IMR-90 (cell line): ENCODE measurements at regions of chr3 and their contacts with region 1.

Region 1: GRCh38 chr3:190701096-190701532 is 161.4 kb downstream of the GMNC start:
- DNase-seq: peak; percentile 44
- ATAC-seq: peak; percentile 87
- H3K4me3 ChIP-seq: no peak overlapping the region
- H3K27ac ChIP-seq: no peak overlapping the region
- H3K4me1 ChIP-seq: no peaks in the 10 kb centered on the region
- H3K27me3 ChIP-seq: no peaks in the 10 kb centered on the region
- CTCF ChIP-seq: peak; percentile 54
- POLR2A ChIP-seq: no peak
- RAD21 ChIP-seq: peak; percentile 62

Region 2: DNA sequence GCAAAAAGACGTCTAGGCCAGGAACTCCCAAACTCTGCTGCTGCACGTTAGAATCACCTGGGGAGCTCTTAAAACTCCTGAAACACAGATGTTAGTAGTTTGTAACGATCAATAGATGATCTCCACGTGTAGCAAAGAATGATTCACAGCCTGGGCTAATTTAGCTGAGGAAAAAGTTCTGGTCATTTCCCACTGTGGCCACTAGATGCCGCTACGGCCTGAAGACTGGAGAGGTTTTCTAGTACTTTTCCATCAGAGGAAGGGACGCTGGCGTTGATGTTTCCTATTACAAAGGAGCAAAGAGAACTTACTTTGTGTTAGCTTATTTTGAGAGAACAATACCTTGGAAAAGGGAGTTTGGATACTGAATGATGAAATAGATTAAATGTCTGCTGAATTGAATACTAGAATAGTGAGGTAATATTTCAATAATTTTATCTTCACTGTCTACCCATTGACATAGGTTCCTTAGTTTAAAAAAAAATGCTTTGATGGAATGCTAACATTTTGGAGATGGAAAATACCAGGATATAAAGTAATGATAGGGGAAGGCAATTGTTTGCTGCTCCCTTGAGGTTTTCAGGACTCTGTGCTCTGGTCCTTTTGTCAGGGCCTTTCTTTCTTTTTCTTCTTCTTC is 739.5 kb before region 1 on chr3:
- CTCF ChIA-PET with region 1: interaction called, 6 read pairs
- POLR2A ChIA-PET with region 1: no interaction called
- dilution Hi-C with region 1: no loop called
- in situ Hi-C with region 1: loop called (anchors 10 kb)
- intact Hi-C with region 1: loop called (anchors 1 kb)
- DNase-seq: peak; percentile 82
- ATAC-seq: peak; percentile 92
- H3K4me3 ChIP-seq: no peak overlapping the region
- H3K27ac ChIP-seq: no peak overlapping the region
- H3K4me1 ChIP-seq: no peaks in the 10 kb centered on the region
- H3K27me3 ChIP-seq: no peaks in the 10 kb centered on the region
- CTCF ChIP-seq: peak; percentile 96
- POLR2A ChIP-seq: no peak
- RAD21 ChIP-seq: peak; percentile 93

Region 3: GRCh38 chr3:190224863-190225692 is 476.0 kb before region 1 on chr3:
- CTCF ChIA-PET with region 1: no interaction called
- POLR2A ChIA-PET with region 1: no interaction called
- dilution Hi-C with region 1: no loop called
- in situ Hi-C with region 1: no loop called
- intact Hi-C with region 1: loop called (anchors 1 kb)
- DNase-seq: peak; percentile 42
- ATAC-seq: peak; percentile 40; the same call in 1 of the 2 replicates
- H3K4me3 ChIP-seq: no peak overlapping the region
- H3K27ac ChIP-seq: no peak overlapping the region
- H3K4me1 ChIP-seq: no peaks in the 10 kb centered on the region
- H3K27me3 ChIP-seq: no peaks in the 10 kb centered on the region
- CTCF ChIP-seq: peak; percentile 65
- POLR2A ChIP-seq: no peak
- RAD21 ChIP-seq: peak; percentile 68

Region 4: DNA sequence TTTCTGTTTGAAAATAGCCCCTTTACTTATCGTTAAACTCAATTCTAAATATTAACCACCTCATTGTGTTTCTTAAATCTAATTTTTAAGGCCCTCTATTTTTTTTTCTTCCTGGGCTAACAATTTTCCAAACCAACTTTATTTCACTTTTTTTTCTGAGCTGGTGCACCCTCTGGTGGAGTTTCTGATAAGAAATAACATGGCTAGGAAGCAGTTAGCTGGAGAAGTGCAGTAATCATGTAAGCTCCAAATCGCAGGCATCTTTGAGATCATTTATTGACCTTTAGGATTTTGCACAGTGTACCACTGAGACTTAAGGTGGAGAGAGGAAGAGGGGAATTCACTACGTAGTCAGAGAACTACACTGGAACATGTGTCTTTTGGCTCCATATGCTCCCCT is 257.9 kb before region 1 on chr3:
- CTCF ChIA-PET with region 1: no interaction called
- POLR2A ChIA-PET with region 1: no interaction called
- dilution Hi-C with region 1: no loop called
- in situ Hi-C with region 1: no loop called
- intact Hi-C with region 1: loop called (anchors 5 kb)
- DNase-seq: peak; percentile 44
- ATAC-seq: no peak
- H3K4me3 ChIP-seq: no peak overlapping the region
- H3K27ac ChIP-seq: no peak overlapping the region
- H3K4me1 ChIP-seq: no peaks in the 10 kb centered on the region
- H3K27me3 ChIP-seq: no peaks in the 10 kb centered on the region
- CTCF ChIP-seq: peak; percentile 52
- POLR2A ChIP-seq: no peak
- RAD21 ChIP-seq: peak; percentile 43

Region 5: DNA sequence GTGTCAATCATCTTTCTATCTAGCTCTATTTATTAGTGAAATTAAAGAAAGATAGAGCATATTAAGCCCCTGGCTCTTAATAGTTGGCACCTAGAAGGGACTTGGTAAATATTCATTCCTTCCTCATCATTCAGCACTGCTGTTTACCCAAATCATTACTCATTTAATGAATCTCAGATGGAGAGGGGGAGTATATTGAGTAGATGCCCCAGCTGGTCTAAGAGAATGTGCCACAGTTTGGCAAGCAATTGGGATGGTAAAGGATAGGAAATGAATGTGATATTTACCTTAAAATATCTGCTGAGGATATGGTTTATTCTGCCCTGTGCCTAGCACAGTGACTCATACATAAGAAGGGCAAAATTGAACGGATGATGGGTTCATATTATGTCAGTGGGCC is 181.2 kb before region 1 on chr3:
- CTCF ChIA-PET with region 1: interaction called, 9 read pairs
- POLR2A ChIA-PET with region 1: no interaction called
- dilution Hi-C with region 1: no loop called
- in situ Hi-C with region 1: loop called (anchors 5 kb)
- intact Hi-C with region 1: no loop called
- DNase-seq: no peak
- ATAC-seq: no peak
- H3K4me3 ChIP-seq: no peak overlapping the region
- H3K27ac ChIP-seq: no peak overlapping the region
- H3K4me1 ChIP-seq: peaks cover 10% of the 10 kb centered on the region
- H3K27me3 ChIP-seq: no peaks in the 10 kb centered on the region
- CTCF ChIP-seq: no peak
- POLR2A ChIP-seq: no peak
- RAD21 ChIP-seq: no peak

Region 6: DNA sequence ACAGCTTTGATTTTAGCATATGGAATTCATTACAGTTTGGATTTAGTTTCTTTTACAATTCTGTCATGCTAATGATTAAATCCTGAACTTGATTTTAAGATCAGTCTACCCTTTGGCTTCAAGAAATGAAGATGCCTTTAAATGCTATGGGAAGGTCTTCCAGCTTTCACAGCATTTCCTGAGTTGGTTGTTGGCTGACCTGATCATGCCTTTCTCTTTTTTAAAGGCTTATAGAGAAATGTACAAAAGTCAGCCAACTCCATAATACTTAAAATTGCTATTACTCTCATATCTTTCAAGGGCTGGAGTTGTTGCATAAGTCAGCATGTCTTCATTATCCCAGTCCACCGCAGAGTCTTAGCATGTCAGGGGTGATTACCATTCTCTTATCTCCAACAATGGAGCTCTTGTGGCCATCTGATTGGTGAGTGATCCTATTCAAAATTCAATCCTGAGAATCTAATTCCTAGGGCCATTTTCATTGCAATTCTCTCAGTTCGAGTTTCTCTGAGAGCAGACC is 37.6 kb after region 1 on chr3:
- CTCF ChIA-PET with region 1: no interaction called
- POLR2A ChIA-PET with region 1: no interaction called
- dilution Hi-C with region 1: no loop called
- in situ Hi-C with region 1: no loop called
- intact Hi-C with region 1: no loop called
- DNase-seq: no peak
- ATAC-seq: no peak
- H3K4me3 ChIP-seq: no peak overlapping the region
- H3K27ac ChIP-seq: no peak overlapping the region
- H3K4me1 ChIP-seq: no peaks in the 10 kb centered on the region
- H3K27me3 ChIP-seq: 0 out of 2 replicates have a peak, but pooled peaks cover 2% of the 10 kb centered on the region
- CTCF ChIP-seq: no peak
- POLR2A ChIP-seq: no peak
- RAD21 ChIP-seq: no peak

Region 7: DNA sequence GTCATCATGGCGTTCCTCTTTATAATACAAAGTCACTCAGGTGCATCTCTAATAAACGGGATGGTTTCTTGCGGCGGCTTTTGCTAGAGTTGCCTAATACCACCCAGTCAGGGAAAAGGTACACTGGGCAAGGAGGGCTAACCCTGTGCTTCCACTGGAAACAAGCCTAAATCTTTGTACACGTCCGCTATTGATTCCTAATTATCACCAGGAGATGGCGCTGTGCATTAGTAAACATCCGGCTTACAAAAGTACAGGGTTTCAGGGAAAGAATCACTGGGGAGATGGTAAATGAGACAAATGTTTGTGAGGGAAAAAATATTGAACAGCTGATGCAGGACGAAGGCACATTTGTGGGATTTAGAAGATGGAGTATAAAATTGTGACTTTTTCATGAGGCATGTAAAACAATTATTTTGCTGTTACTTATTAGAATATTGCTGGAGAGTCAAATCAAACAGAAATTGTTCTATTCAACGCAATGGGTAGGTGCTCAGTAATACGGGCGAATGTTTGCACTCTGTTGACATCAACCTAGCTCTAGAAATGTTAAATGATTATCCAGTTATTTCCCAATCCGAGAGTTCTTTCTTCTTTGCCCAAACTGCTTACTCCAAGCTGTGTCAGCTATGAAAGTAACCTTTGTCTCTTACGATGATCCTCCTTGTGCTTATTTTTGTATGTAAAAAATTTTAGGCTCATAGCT is 110.8 kb after region 1 on chr3:
- CTCF ChIA-PET with region 1: interaction called, 6 read pairs
- POLR2A ChIA-PET with region 1: no interaction called
- dilution Hi-C with region 1: no loop called
- in situ Hi-C with region 1: no loop called
- intact Hi-C with region 1: loop called (anchors 5 kb)
- DNase-seq: peak; percentile 60
- ATAC-seq: peak; percentile 68
- H3K4me3 ChIP-seq: no peak overlapping the region
- H3K27ac ChIP-seq: no peak overlapping the region
- H3K4me1 ChIP-seq: no peaks in the 10 kb centered on the region
- H3K27me3 ChIP-seq: peaks cover 2% of the 10 kb centered on the region; the same call in 1 of the 2 replicates
- CTCF ChIP-seq: peak; percentile 71
- POLR2A ChIP-seq: no peak
- RAD21 ChIP-seq: peak; percentile 55; the same call in 1 of the 2 replicates

Region 8: DNA sequence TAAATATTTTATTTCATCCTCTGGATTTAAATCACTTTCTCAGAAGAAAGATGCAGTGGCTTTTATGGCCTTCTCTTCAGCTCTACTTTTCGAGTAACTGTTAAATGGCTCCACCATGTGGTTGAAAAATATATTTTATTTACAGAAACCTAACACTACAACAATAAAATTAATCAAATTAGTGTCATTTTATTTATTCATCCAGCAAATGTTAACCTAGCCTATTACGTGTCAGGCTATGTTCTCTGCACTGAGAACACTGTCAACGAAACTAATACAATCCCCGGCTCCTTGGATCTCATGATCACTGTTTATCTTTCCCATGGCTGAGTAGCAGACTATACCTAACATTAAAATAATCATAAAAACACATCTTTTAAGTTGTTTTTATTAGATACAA is 349.9 kb after region 1 on chr3:
- CTCF ChIA-PET with region 1: interaction called, 6 read pairs
- POLR2A ChIA-PET with region 1: no interaction called
- dilution Hi-C with region 1: no loop called
- in situ Hi-C with region 1: loop called (anchors 10 kb)
- intact Hi-C with region 1: loop called (anchors 1 kb)
- DNase-seq: peak; percentile 47
- ATAC-seq: peak; percentile 85
- H3K4me3 ChIP-seq: no peak overlapping the region
- H3K27ac ChIP-seq: no peak overlapping the region
- H3K4me1 ChIP-seq: no peaks in the 10 kb centered on the region
- H3K27me3 ChIP-seq: no peaks in the 10 kb centered on the region
- CTCF ChIP-seq: peak; percentile 70
- POLR2A ChIP-seq: no peak
- RAD21 ChIP-seq: peak; percentile 63

Region 9: DNA sequence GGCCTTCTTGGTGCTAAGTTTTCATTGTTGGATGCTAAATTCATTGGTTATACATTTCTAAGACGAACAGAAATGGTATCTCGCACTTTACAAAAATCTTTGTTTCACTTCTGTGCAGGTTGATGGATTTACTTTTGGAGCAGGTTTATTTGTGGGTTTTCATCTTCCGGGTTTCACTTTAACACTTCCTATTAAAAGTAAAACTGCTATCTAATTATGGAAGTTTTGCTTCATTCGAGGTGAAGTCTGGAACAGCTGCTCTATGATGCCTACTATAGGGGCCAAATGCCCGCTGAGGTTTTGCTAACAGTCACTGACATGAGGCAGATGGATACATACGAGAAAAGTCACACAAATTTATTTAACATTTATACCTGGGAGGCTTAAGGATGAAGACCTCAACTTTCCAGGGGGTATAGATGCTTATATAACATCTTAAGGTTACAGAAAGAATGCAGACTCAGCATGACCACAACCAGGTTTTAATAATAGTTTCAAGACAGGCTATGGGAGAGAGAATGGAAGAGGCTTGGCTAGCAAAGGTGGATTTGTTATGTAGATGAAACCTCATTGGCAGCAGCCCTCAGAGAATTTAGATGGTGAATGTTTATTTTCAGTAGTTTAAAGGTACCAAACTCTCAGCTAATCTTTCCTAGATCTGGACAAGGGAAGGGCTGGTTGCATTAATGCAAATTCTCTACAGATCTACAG is 552.1 kb after region 1 on chr3:
- CTCF ChIA-PET with region 1: no interaction called
- POLR2A ChIA-PET with region 1: no interaction called
- dilution Hi-C with region 1: no loop called
- in situ Hi-C with region 1: no loop called
- intact Hi-C with region 1: no loop called
- DNase-seq: no peak
- ATAC-seq: no peak
- H3K4me3 ChIP-seq: no peak overlapping the region
- H3K27ac ChIP-seq: no peak overlapping the region
- H3K4me1 ChIP-seq: no peaks in the 10 kb centered on the region
- H3K27me3 ChIP-seq: no peaks in the 10 kb centered on the region
- CTCF ChIP-seq: no peak
- POLR2A ChIP-seq: no peak
- RAD21 ChIP-seq: no peak